Activated B cell treated with CpG ODN at 0.5 μM for 24 hours (primary cell): ENCODE measurements at regions of chr9 and their contacts with region 1.

Region 1: DNA sequence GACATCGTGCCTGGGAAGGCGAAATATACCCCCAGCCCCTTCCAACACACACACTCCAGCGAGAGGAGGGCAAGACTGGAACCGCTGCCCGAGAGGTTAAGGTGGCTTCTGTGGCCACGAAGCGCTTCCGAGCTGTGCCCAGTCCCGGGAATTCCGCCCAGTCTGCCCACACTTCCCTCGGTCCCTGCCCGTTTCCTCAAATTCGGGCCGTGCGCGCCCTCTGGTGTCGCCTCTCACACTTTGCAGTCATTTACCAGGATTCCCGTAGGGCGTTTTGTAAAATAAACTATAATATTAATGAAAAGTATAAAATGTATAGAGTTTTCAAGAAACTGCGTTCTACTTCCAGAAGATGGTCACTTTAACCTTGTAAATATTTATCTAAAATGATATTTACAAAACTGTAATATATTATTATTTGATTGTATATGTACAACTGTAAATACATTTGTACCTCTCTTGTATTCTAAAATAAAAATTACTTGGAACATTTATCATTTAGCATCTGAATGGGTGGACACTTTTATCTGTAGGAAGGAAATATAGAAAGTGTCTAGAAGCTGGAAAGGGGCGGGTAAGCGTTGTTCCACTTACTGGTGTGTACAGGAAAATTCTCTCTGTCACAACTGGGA is 11.0 kb upstream of the EXOSC2 start:
- DNase-seq: no peak
- ATAC-seq: peak; percentile 51
- H3K4me3 Mint-ChIP-seq: peak overlapping the region; percentile 90
- H3K27ac Mint-ChIP-seq: no peak overlapping the region
- H3K4me1 Mint-ChIP-seq: peaks cover 8% of the 10 kb centered on the region
- H3K27me3 Mint-ChIP-seq: peaks cover 14% of the 10 kb centered on the region
- CTCF ChIP-seq: peak; percentile 89

Region 2: DNA sequence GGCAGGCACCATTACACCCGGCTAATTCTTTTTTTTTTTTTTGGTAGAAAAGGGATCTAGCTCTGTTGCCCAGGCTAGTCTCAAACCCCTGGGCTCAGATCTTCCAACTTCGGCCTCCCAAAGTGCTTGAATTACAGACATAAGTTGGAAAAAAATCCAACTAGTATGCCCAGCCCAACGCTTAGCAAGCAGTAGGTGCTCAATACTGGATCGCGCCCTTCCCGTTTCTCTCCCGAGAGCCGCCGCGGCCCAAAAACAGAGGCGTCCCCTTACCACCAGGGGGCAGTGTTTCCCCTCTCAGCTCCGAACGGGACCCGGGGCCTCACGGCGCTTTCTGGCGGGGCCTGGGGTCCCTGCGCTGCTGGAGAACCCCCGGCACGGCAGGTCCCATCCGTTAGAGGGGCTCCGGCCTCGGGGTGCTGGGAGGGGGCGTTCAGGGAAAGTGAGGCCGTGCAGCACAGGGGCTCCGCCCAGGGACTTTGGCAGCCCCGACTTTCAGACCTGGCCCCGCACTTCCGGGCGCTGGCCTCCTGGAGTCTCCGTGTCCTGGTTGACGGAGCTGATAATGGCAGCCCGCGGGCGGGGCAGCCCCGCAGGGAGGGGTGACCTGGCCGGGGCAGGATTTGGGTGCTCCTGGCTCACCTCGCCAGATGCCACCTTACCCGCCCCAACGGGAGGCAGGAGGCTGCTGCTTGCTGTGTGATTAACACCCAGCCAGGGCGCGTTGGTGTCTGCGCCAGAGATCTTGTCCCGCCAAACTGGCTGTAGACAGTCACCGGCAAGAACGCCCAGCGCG is 944.9 kb before region 1 on chr9:
- CTCF ChIA-PET with region 1: no interaction called
- POLR2A ChIA-PET with region 1: no interaction called
- intact Hi-C with region 1: loop called (anchors 5 kb)
- DNase-seq: peak; percentile 81
- ATAC-seq: peak; percentile 91
- H3K4me3 Mint-ChIP-seq: peak overlapping the region; percentile 70
- H3K27ac Mint-ChIP-seq: no peak overlapping the region
- H3K4me1 Mint-ChIP-seq: peaks cover 10% of the 10 kb centered on the region
- H3K27me3 Mint-ChIP-seq: peaks cover 6% of the 10 kb centered on the region
- CTCF ChIP-seq: peak; percentile 82

Region 3: DNA sequence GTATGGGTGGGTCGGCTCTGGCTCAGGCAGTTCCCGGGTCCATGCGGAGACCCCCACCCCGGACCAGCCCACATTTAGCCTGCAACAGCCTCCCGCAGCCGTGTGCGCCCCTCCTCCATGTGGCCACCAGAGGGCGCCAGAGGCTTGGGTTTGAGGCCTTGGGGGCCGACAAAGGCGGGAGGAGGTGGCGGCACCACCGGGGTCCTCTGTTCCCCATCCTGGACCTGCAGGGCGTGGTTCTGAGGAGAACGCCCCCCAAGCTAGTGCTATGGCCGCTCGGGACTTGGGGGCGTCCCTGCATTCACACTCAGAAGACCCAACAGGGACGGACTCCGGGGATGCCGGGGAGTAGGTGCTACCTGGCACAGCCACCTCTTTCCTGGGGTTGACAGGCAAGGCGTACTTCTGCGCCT is 221.4 kb before region 1 on chr9:
- CTCF ChIA-PET with region 1: interaction called, 51 read pairs
- POLR2A ChIA-PET with region 1: no interaction called
- intact Hi-C with region 1: loop called (anchors 1 kb)
- DNase-seq: peak; percentile 74
- ATAC-seq: peak; percentile 76
- H3K4me3 Mint-ChIP-seq: no peak overlapping the region
- H3K27ac Mint-ChIP-seq: no peak overlapping the region
- H3K4me1 Mint-ChIP-seq: no peaks in the 10 kb centered on the region
- H3K27me3 Mint-ChIP-seq: peaks cover 11% of the 10 kb centered on the region
- CTCF ChIP-seq: peak; percentile 77

Region 4: DNA sequence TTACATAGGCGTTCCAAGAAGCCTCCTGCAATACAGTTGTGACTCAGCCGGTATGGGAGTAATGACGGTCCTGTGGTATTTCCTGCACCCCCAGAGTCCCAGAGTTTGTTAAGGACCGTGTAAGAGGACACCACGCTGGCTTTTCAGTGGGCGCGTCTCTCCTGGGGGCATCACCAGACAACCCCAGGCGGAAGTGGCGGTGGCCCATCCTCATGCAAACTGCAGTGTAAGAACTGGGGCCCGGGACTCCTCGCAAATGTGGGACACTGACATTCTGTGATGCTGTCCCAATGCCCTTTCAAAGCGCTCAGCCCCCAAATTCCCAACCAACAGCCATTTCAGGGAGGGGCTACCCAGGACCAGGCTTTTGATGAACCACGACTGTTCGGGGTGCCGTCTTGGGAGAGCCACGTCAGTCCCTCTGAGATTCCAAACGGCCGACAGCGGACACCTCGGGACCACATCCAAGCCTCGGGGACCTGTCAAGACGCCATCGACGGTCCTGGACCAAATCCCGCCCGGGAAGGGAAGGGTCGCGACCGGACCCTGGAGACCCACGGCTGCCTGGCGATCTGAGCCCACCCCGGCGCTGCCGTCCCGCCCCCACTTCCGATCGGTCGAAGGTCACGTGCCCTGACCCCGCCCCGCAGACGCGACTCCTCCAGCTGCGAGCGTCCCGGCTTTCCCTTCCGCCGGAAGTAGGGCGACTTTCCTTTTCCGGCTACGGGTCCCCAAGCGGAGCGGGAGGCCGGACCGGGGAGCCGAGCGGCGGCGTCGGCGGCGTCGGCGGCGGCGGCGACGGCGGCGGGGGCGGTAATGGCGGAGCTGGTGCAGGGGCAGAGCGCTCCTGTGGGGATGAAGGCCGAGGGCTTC is 103.5 kb before region 1 on chr9 and contains the start of gene FUBP3:
- CTCF ChIA-PET with region 1: no interaction called
- POLR2A ChIA-PET with region 1: no interaction called
- intact Hi-C with region 1: loop called (anchors 1 kb)
- DNase-seq: peak; percentile 86
- ATAC-seq: peak; percentile 85
- H3K4me3 Mint-ChIP-seq: peak within 1 kb of the TSS; percentile 91
- H3K27ac Mint-ChIP-seq: peak within 1 kb of the TSS; percentile 79
- H3K4me1 Mint-ChIP-seq: peaks cover 37% of the 10 kb centered on the region
- H3K27me3 Mint-ChIP-seq: no peaks in the 10 kb centered on the region
- CTCF ChIP-seq: no peak
- total RNA-seq, gene FUBP3: 38.6 and 44.7 TPM in 2 replicates

Region 5: DNA sequence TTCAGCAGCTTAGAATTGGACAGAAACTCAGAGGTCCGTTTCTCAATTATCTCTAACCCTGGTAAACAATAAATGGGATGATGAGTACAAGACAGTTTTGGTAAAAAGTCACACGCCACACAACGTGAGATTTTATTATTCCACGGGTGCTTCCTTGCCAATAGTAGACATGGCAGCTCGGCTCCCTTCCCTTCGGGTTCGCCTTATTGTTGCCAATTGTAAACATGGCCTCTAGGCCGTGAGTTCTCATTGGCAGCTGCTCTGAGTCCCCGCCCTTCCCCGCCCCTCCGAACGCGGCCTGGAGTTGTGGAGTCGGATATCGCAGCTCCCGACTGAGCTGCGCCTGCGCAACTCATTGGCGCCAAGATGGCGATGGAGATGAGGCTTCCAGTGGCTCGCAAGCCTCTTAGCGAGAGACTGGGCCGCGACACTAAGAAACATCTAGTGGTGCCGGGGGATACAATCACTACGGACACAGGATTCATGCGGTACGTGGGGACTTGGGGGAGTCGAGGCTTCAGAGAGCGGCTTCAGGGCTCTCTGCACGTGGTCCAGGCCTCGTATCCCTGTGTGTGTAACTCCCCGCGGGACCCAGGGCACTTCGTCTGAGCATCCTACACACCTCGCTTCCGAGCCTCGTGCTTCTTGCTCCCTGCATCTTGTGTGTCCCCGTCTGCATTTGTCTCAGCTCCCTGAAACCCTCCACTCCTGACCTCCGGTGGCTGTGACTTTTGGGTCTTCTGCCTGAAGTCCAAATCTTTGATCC is 11.0 kb after region 1 on chr9 and contains the start of gene EXOSC2:
- CTCF ChIA-PET with region 1: interaction called, 17 read pairs
- POLR2A ChIA-PET with region 1: interaction called, 8 read pairs
- intact Hi-C with region 1: no loop called
- DNase-seq: peak; percentile 79
- ATAC-seq: peak; percentile 99
- H3K4me3 Mint-ChIP-seq: peak within 1 kb of the TSS; percentile 94
- H3K27ac Mint-ChIP-seq: peak within 1 kb of the TSS; percentile 93
- H3K4me1 Mint-ChIP-seq: peaks cover 30% of the 10 kb centered on the region
- H3K27me3 Mint-ChIP-seq: no peaks in the 10 kb centered on the region
- CTCF ChIP-seq: no peak
- total RNA-seq, gene EXOSC2: 49.6 and 54.8 TPM in 2 replicates

Region 6: DNA sequence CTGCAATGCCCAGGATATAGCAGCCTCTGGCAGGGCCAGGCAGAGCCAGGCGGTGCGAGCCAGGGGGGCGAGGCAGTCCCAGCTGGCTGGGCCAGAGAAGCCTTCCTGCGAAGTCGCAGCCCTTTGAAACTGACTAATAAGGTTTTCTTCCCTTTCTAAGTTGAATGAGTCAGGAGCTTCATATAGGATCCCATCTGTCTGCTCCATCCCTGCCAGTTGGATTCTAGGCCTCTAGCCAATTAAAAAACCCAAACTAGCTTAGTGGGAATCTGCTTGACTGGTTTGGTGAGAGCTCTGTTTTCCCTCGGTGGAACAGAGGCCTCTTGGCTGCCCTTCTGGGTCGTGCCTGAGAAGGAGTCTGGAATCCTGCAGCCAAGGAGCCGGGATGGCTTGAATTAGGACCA is 1127.3 kb after region 1 on chr9:
- CTCF ChIA-PET with region 1: no interaction called
- POLR2A ChIA-PET with region 1: no interaction called
- intact Hi-C with region 1: no loop called
- DNase-seq: no peak
- ATAC-seq: no peak
- H3K4me3 Mint-ChIP-seq: no peak overlapping the region
- H3K27ac Mint-ChIP-seq: no peak overlapping the region
- H3K4me1 Mint-ChIP-seq: no peaks in the 10 kb centered on the region
- H3K27me3 Mint-ChIP-seq: peaks cover 26% of the 10 kb centered on the region
- CTCF ChIP-seq: no peak